ENCODE measurements at regions of chrX and their contacts with region 1.

Region 1: GRCh38 chrX:14029425-14030173 is at the start of gene GEMIN8:
- DNase-seq: peak; percentile 60 to 93 (median 87)
- ATAC-seq: peak; percentile 88
- H3K4me3 ChIP-seq: peak within 1 kb of the TSS; percentile 82 to 98
- H3K4me3 Mint-ChIP-seq: peak within 1 kb of the TSS; percentile 94
- H3K27ac ChIP-seq: peak within 1 kb of the TSS; percentile 93 to 95
- H3K27ac Mint-ChIP-seq: peak within 1 kb of the TSS; percentile 98
- H3K4me1 ChIP-seq: peaks cover 21% of the 10 kb centered on the region
- H3K4me1 Mint-ChIP-seq: peaks cover 39% of the 10 kb centered on the region
- H3K27me3 ChIP-seq: no peaks in the 10 kb centered on the region
- H3K27me3 Mint-ChIP-seq: no peaks in the 10 kb centered on the region
- CTCF ChIP-seq: no peak
- total RNA-seq, gene GEMIN8: 7.8 to 9.4 TPM

Region 2: DNA sequence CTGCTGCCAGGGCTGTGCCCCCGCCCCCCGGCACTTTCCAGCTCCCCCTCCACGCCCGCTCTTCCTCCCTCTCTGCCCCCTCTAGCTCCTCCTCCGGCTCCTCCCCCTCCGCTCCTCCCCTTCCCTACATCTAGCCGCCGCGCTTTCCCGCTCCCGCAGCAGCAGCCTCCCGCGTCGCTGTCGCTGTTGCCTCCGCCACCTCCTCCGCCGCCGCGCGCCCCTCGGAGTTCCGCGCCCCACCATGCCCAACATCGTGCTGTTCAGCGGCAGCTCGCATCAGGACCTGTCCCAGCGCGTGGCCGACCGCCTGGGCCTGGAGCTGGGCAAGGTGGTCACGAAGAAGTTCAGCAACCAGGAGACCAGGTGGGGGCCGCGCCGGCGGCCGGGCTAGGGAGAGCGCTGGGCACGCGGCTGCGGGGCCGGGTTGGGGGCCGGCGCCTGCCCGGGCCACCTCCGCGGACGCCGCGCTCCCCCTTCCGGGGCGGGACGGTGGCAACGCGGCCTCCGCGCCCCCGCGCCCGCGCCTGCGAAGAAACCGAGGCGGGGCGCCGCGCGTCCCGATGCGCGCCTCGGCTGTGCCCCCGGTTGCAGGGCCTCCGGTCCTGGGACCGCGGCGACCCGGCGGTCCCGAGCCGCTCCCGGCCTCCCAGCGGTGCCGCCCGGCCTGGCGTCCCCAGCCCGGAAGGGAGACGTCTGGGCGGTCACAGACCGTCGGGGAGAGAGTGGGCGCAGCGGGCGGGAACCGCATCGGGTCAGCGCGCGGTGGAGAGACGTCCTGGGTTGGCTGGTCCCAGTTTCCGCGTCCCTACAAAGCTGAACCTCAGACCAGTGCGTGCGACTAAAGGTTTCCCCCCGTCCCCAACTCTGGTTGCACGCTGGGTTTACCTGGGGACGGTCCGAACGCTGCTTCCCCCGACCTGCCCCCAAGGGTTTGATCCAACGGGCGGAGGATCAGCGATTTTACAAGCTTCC is 1238.1 kb before region 1 on chrX and contains the start of gene PRPS2:
- CTCF ChIA-PET with region 1: no interaction called
- POLR2A ChIA-PET with region 1: interaction called, 3 read pairs
- intact Hi-C with region 1: loop called in 1 of 2 experiments (anchors 10 kb)
- DNase-seq: peak; percentile 43 to 80 (median 71)
- ATAC-seq: peak; percentile 93
- H3K4me3 ChIP-seq: peak within 1 kb of the TSS; percentile 69 to 74
- H3K4me3 Mint-ChIP-seq: peak within 1 kb of the TSS; percentile 90
- H3K27ac ChIP-seq: peak within 1 kb of the TSS; percentile 39 to 52
- H3K27ac Mint-ChIP-seq: peak within 1 kb of the TSS; percentile 81
- H3K4me1 ChIP-seq: peaks cover 9% of the 10 kb centered on the region
- H3K4me1 Mint-ChIP-seq: peaks cover 26% of the 10 kb centered on the region
- H3K27me3 ChIP-seq: no peaks in the 10 kb centered on the region
- H3K27me3 Mint-ChIP-seq: no peaks in the 10 kb centered on the region
- CTCF ChIP-seq: no peak
- total RNA-seq, gene PRPS2: 10.5 to 13.4 TPM

Region 3: DNA sequence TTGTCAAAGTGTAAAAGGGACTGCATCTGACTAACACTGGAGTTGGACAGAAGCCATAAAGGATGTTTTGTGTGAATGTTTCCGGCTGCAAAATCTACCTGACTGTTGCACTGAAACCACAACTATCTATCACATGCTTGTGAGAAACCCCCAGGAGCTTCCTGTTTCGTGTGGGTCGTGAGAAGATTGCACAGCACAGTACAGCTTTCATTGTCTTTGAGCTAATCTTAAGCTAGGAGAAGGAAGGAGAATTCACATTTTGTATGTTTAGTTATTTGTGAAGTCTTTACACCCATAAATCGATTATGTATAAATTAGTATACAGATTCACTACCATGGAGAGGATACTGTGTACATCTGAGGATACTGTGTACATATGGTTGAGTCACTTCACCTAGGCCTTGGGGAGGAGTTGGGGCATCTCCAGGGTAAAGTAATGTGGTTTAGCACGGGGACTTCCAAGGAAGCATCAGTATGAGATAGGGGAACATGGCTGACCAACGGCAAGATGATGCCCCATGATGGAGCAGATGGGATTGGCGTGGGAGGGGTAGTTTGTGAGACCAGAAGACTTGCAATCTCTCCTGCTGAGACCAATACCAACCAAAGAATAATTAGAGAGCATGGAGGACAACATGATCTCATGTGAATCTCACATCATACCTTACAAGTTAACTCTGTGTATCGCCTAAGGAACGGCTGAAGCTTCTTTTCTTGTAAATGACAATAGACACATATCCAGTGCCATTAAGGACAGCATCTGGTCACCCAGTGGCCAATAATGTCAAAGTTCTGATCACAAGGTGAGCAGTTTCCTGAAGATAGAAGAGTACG is 942.1 kb before region 1 on chrX:
- CTCF ChIA-PET with region 1: no interaction called
- POLR2A ChIA-PET with region 1: no interaction called
- intact Hi-C with region 1: loop called in 1 of 2 experiments (anchors 10 kb)
- DNase-seq: peak in 7 of 9 experiments; percentile 41 to 94 (median 75)
- ATAC-seq: peak; percentile 60
- H3K4me3 ChIP-seq: peak overlapping the region in 1 of 2 experiments; percentile 10
- H3K4me3 Mint-ChIP-seq: peak overlapping the region; percentile 80
- H3K27ac ChIP-seq: peak overlapping the region; percentile 57 to 96
- H3K27ac Mint-ChIP-seq: peak overlapping the region; percentile 98
- H3K4me1 ChIP-seq: peaks cover 90% of the 10 kb centered on the region
- H3K4me1 Mint-ChIP-seq: peaks cover 84% of the 10 kb centered on the region
- H3K27me3 ChIP-seq: no peaks in the 10 kb centered on the region
- H3K27me3 Mint-ChIP-seq: no peaks in the 10 kb centered on the region
- CTCF ChIP-seq: no peak

Region 4: GRCh38 chrX:13658602-13659001 is 371.0 kb before region 1 on chrX:
- CTCF ChIA-PET with region 1: interaction called, 4 read pairs
- POLR2A ChIA-PET with region 1: interaction called, 4 read pairs
- intact Hi-C with region 1: loop called (anchors 1 to 2 kb)
- DNase-seq: peak in 3 of 9 experiments; percentile 23 to 77 (median 63)
- ATAC-seq: peak; percentile 44
- H3K4me3 ChIP-seq: no peak overlapping the region
- H3K4me3 Mint-ChIP-seq: peak overlapping the region; percentile 18
- H3K27ac ChIP-seq: peak overlapping the region in 1 of 2 experiments; percentile 56
- H3K27ac Mint-ChIP-seq: peak overlapping the region; percentile 79
- H3K4me1 ChIP-seq: peaks cover 10% of the 10 kb centered on the region
- H3K4me1 Mint-ChIP-seq: peaks cover 30% of the 10 kb centered on the region
- H3K27me3 ChIP-seq: no peaks in the 10 kb centered on the region
- H3K27me3 Mint-ChIP-seq: no peaks in the 10 kb centered on the region
- CTCF ChIP-seq: peak; percentile 48

Region 5: DNA sequence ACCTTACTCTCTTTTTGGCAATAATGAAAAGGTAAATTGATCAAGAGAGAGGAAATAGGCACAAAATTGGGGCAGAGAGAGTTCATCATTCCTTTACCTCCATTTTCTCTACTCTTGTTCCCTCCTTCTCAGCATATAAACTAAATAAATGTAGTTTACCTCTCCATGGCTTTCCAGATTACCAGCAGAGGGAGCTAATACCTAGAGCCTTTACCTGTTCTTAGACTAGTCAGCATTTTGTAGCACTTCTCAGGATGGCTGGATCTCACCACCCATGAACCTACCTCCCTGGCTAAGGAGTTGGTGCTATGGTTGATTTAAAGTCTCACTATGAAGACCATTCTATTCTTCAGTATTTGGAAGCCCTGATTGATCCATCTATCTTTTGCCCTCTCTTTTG is 279.4 kb before region 1 on chrX:
- CTCF ChIA-PET with region 1: interaction called, 18 read pairs
- POLR2A ChIA-PET with region 1: interaction called, 3 read pairs
- intact Hi-C with region 1: loop called (anchors 1 kb)
- DNase-seq: peak in 3 of 9 experiments; percentile 12 to 65 (median 53)
- ATAC-seq: peak; percentile 63
- H3K4me3 ChIP-seq: no peak overlapping the region
- H3K4me3 Mint-ChIP-seq: no peak overlapping the region
- H3K27ac ChIP-seq: peak overlapping the region in 1 of 2 experiments; percentile 36
- H3K27ac Mint-ChIP-seq: peak overlapping the region; percentile 64
- H3K4me1 ChIP-seq: peaks cover 6% of the 10 kb centered on the region
- H3K4me1 Mint-ChIP-seq: peaks cover 30% of the 10 kb centered on the region
- H3K27me3 ChIP-seq: no peaks in the 10 kb centered on the region
- H3K27me3 Mint-ChIP-seq: no peaks in the 10 kb centered on the region
- CTCF ChIP-seq: peak; percentile 37

Region 6: GRCh38 chrX:15335135-15336022 is 1305.8 kb after region 1 on chrX and contains the start of gene PIGA:
- CTCF ChIA-PET with region 1: no interaction called
- POLR2A ChIA-PET with region 1: no interaction called
- intact Hi-C with region 1: loop called (anchors 2 to 5 kb)
- DNase-seq: peak; percentile 82 to 96 (median 89)
- ATAC-seq: peak; percentile 90
- H3K4me3 ChIP-seq: peak within 1 kb of the TSS; percentile 85 to 91
- H3K4me3 Mint-ChIP-seq: peak within 1 kb of the TSS; percentile 93
- H3K27ac ChIP-seq: peak within 1 kb of the TSS; percentile 86 to 92
- H3K27ac Mint-ChIP-seq: peak within 1 kb of the TSS; percentile 97
- H3K4me1 ChIP-seq: peaks cover 8% of the 10 kb centered on the region
- H3K4me1 Mint-ChIP-seq: peaks cover 26% of the 10 kb centered on the region
- H3K27me3 ChIP-seq: no peaks in the 10 kb centered on the region
- H3K27me3 Mint-ChIP-seq: peaks cover 6% of the 10 kb centered on the region
- CTCF ChIP-seq: no peak
- total RNA-seq, gene PIGA: 135 to 143 TPM

Measured in CD8-positive, alpha-beta T cell (primary cell).